Stomach (tissue), 19 donors: ENCODE measurements at regions of chr9 and their contacts with region 1.

Region 1: GRCh38 chr9:90142580-90142979 is 500.0 kb downstream of the DIRAS2 start:
- DNase-seq: peak; percentile 74 to 81
- H3K4me3 ChIP-seq: no peak overlapping the region
- H3K27ac ChIP-seq: no peak overlapping the region
- H3K4me1 ChIP-seq: no peaks in the 10 kb centered on the region
- H3K27me3 ChIP-seq: peaks cover 0 to 20% (median 0%) of the 10 kb centered on the region in 3 donors
- CTCF ChIP-seq: peak in 4 of 7 experiments; percentile 15 to 63 (median 56)
- EP300 ChIP-seq: no peak
- POLR2A ChIP-seq: no peak

Region 2: DNA sequence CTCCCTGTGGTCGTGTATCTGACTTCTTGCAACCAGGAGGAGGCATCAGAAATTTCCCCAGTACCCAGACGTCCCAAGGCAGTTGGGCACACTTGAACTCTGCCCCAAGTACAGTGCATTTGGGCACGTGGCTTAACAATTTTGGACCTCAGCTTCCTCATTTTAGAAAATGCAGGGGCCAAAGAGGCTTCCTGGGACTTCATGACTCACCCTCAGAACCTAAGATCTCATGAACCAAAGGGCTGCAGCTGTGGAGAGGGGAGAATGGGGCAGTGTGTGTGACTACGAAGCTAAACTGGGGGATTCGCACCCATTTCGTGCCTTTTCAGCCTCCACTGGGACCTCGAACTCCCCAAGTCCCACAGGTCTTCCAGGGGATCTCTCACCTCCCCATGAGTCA is 718.2 kb after region 1 on chr9:
- intact Hi-C with region 1: loop called (anchors 10 kb)
- DNase-seq: no peak
- H3K4me3 ChIP-seq: no peak overlapping the region
- H3K27ac ChIP-seq: no peak overlapping the region
- H3K4me1 ChIP-seq: no peaks in the 10 kb centered on the region
- H3K27me3 ChIP-seq: no peaks in the 10 kb centered on the region
- CTCF ChIP-seq: no peak
- EP300 ChIP-seq: no peak
- POLR2A ChIP-seq: no peak